ENCODE measurements at regions of chr20 and their contacts with region 1.

Region 1: GRCh38 chr20:37276494-37277252 is 12.8 kb upstream of the MANBAL start:
- DNase-seq: no peak
- ATAC-seq: peak; percentile 94
- H3K4me3 ChIP-seq: no peak overlapping the region
- H3K27ac ChIP-seq: peak overlapping the region; percentile 78
- H3K4me1 ChIP-seq: peaks cover 42% of the 10 kb centered on the region
- H3K27me3 ChIP-seq: no peaks in the 10 kb centered on the region
- CTCF ChIP-seq: peak; percentile 30 to 69 (median 51); a peak in 4 of 6 replicates
- EP300 ChIP-seq: peak; percentile 27 to 40; a peak in 1 of 4 replicates
- POLR2A ChIP-seq: 0 out of 2 replicates have a peak, but pooled peaks have one; percentile 36
- RAD21 ChIP-seq: peak; percentile 75

Region 2: DNA sequence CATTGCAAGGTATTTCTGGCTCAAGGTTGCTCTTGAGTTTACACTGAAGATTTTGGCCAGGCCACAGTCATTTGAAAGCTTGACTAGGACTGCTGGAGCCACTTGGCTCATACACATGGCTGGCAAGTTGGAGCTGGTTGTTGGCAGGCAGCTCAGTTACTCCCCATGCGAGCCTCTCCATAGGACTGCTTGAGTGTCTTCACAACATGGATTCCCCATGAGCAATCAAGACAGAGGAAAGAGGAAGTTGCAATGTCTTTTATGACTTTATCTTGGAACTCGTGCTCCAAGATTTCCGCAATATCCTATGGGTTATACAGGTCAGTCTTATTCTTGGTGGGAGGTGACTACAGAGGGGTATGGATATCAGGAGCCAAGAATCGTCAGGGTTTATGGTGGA is 11.4 kb after region 1 on chr20:
- CTCF ChIA-PET with region 1: interaction called, 15 read pairs
- POLR2A ChIA-PET with region 1: interaction called, 11 read pairs
- RAD21 ChIA-PET with region 1: interaction called, 21 read pairs
- SMC1A ChIA-PET with region 1: interaction called, 17 read pairs
- in situ Hi-C with region 1: no loop called
- intact Hi-C with region 1: no loop called
- DNase-seq: no peak
- ATAC-seq: no peak
- H3K4me3 ChIP-seq: no peak overlapping the region
- H3K27ac ChIP-seq: no peak overlapping the region
- H3K4me1 ChIP-seq: peaks cover 16% of the 10 kb centered on the region
- H3K27me3 ChIP-seq: no peaks in the 10 kb centered on the region
- CTCF ChIP-seq: no peak
- EP300 ChIP-seq: no peak
- POLR2A ChIP-seq: no peak
- RAD21 ChIP-seq: no peak

Region 3: DNA sequence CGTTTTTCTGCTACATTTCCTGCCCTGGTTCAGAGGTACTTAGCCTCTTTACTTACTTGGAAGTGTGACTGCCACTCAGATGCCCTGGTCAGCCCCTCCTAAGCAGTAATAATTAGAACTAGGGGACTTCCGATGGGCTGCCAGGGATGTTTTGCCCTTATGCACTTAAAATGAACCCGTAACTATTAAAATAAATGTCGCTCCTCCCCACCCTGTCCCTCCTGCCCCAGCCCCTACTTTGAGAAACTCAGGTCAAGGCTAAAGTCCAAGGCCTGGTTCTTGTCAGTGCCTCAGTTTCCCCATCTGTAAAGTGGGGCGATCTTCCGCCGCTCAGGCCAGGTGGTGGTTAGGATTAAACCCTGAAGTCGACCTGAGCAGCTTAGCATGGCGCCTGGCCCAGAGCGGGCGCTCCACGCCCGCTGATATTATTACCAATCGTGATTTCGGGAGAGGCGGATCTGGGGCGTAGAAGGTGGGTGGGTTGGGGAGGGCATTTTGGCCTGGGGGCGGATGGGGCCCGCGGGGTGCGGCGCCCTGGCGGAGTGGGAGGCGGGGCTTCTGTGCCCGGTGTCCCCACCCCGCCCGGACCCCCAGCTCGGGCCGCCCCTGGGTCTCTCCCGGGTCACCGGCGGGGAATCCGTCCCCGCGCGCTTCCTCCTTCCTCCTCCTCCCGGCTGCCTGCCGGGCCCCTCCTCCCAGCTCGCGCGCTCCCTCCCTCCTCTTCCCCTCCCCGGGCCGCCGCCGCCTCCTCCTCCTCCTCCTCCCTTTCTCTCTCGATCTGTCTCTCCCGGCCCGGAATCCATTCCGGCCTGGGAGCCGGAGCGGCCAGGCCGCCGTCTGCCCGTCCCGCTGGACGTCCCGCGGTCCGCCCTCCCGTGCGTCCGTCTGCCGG is 68.9 kb after region 1 on chr20 and contains the start of gene SRC:
- CTCF ChIA-PET with region 1: interaction called, 11 read pairs
- POLR2A ChIA-PET with region 1: interaction called, 8 read pairs
- RAD21 ChIA-PET with region 1: interaction called, 6 read pairs
- SMC1A ChIA-PET with region 1: interaction called, 8 read pairs
- in situ Hi-C with region 1: no loop called
- intact Hi-C with region 1: loop called (anchors 2 kb)
- DNase-seq: no peak
- ATAC-seq: peak; percentile 54
- H3K4me3 ChIP-seq: peak within 1 kb of the TSS; percentile 87
- H3K27ac ChIP-seq: peak within 1 kb of the TSS; percentile 90
- H3K4me1 ChIP-seq: peaks cover 29% of the 10 kb centered on the region
- H3K27me3 ChIP-seq: no peaks in the 10 kb centered on the region
- CTCF ChIP-seq: 0 out of 6 replicates have a peak, but pooled peaks of 1 of the 3 experiments have one; percentile 4
- EP300 ChIP-seq: no peak
- POLR2A ChIP-seq: peak; percentile 69
- RAD21 ChIP-seq: no peak
- polyA plus RNA-seq, gene SRC: 0.60 to 0.85 TPM

Region 4: DNA sequence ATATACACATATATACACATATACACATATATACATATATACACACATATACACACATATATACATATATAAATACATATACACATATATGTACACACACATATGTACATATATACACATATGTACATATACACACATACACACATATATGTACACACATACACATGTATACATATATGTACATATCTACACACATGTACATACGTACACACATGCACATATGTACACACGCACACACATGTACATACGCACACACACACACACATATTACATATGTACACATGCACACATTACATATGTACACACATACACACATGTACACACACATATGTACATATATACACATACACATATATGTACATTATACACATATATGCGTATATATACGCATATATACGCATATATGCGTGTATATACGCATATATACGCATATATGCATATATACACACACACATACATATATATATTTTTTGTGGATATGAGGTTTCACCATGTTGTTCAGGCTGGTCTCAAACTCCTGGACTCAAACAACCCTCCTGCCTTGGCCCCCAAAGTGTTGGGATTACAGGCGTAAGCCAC is 96.4 kb after region 1 on chr20:
- CTCF ChIA-PET with region 1: interaction called, 14 read pairs
- POLR2A ChIA-PET with region 1: no interaction called
- RAD21 ChIA-PET with region 1: interaction called, 4 read pairs
- SMC1A ChIA-PET with region 1: interaction called, 6 read pairs
- in situ Hi-C with region 1: no loop called
- intact Hi-C with region 1: no loop called
- DNase-seq: no peak
- ATAC-seq: no peak
- H3K4me3 ChIP-seq: no peak overlapping the region
- H3K27ac ChIP-seq: no peak overlapping the region; the same call in 1 of the 2 replicates
- H3K4me1 ChIP-seq: peaks cover 75% of the 10 kb centered on the region
- H3K27me3 ChIP-seq: no peaks in the 10 kb centered on the region
- CTCF ChIP-seq: no peak
- EP300 ChIP-seq: no peak
- POLR2A ChIP-seq: no peak
- RAD21 ChIP-seq: no peak

Measured in GM12878 (cell line).